ENCODE measurements at regions of chr1 and their contacts with region 1.

Region 1: GRCh38 chr1:155017041-155017945 is 14.7 kb downstream of the ZBTB7B start:
- DNase-seq: peak; percentile 93
- H3K4me3 ChIP-seq: peak overlapping the region; percentile 20 to 51; a peak in 2 of 4 replicates
- H3K27ac ChIP-seq: no peak overlapping the region
- H3K4me1 ChIP-seq: peaks cover 0 to 6% of the 10 kb centered on the region in 2 experiments; a peak in 1 of 4 replicates
- H3K27me3 ChIP-seq: no peaks in the 10 kb centered on the region
- CTCF ChIP-seq: peak; percentile 86
- EP300 ChIP-seq: no peak
- RAD21 ChIP-seq: peak; percentile 67

Region 2: DNA sequence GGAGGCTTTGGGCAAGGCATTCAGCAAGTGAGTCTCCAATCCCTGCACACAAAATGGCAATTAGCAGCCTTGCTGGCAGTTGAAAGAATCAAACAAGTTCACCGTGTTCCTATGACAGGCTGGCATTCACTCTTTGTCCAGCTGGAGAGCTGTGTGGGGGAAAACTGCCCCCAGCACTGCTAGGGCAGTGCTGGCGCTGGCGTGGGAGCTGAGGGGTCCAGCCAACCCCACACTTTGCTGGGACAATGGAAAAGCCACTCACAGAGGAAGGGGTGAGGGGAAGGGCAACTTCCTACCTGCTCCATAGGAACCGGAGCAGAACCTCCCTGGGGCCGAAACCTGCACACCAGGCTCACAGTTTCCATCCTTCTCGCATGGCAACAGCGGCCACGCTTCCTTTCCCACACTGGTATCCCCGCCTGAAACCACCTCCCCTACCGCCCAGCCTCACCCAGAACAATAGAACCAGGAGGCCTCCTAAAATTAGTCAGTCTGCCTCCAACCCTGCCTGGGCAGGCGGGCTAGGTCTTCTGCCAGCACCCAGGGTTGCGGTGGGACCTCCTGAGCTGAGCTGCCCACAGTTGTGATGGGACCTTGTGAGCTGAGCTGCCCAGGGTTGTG is 120.4 kb before region 1 on chr1:
- CTCF ChIA-PET with region 1: no interaction called
- POLR2A ChIA-PET with region 1: no interaction called
- DNase-seq: no peak
- H3K4me3 ChIP-seq: no peak overlapping the region
- H3K27ac ChIP-seq: no peak overlapping the region
- H3K4me1 ChIP-seq: peaks cover 0 to 9% of the 10 kb centered on the region in 2 experiments; a peak in 2 of 4 replicates
- H3K27me3 ChIP-seq: peaks cover 12% of the 10 kb centered on the region
- CTCF ChIP-seq: no peak
- EP300 ChIP-seq: no peak
- RAD21 ChIP-seq: no peak

Region 3: GRCh38 chr1:154943649-154944400 is 73.5 kb before region 1 on chr1:
- CTCF ChIA-PET with region 1: interaction called, 13 read pairs
- POLR2A ChIA-PET with region 1: no interaction called
- DNase-seq: peak; percentile 83
- H3K4me3 ChIP-seq: no peak overlapping the region
- H3K27ac ChIP-seq: no peak overlapping the region
- H3K4me1 ChIP-seq: peaks cover 4 to 25% of the 10 kb centered on the region in 2 experiments; a peak in 2 of 4 replicates
- H3K27me3 ChIP-seq: no peaks in the 10 kb centered on the region
- CTCF ChIP-seq: peak; percentile 82
- EP300 ChIP-seq: no peak
- RAD21 ChIP-seq: peak; percentile 80

Region 4: DNA sequence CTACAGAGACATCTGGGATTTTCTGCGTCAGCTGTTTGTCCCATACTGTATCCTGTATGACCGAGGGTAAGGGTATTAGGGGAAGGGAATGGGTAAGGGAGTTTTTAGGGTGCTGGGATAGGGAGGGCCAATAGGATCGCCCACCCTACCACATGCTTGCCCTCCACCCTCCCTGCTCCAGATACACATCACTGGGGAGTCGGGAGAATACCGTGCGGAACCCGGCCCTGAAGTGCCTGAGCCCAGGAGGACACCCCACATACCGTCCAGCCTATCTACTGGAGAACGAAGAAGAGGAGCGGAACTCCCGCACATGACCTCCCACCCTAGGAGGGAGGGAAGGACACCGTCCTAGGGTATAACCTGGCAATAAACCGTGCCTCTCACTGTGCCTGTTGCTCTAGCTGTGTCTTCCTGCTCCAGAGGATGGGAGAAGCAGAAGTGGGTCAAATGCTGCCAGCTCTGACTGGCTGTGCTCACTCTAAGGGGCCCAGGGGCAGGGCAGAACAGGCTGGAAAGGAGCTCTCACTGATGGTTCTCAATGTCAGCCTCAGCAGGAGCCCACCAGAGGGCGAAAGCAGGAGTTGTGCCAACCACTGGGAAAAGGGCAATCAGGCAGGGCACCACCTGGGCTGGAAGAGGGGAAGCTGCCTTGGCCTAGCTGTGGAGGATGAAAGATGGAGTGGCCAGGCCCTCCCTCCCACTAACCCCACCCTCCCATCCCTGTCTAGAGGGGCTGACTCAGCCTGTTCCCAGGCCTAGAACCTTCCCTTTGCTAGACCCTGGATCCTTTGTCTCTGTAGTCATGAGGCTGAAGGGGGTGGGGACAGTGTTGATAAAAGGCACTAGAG is 24.3 kb before region 1 on chr1:
- CTCF ChIA-PET with region 1: interaction called, 149 read pairs
- POLR2A ChIA-PET with region 1: interaction called, 4 read pairs
- DNase-seq: no peak
- H3K4me3 ChIP-seq: no peak overlapping the region
- H3K27ac ChIP-seq: peak overlapping the region; percentile 14 to 43; a peak in 2 of 4 replicates
- H3K4me1 ChIP-seq: peaks cover 3 to 29% of the 10 kb centered on the region in 2 experiments; a peak in 3 of 4 replicates
- H3K27me3 ChIP-seq: no peaks in the 10 kb centered on the region
- CTCF ChIP-seq: peak; percentile 30
- EP300 ChIP-seq: no peak
- RAD21 ChIP-seq: peak; percentile 31

Region 5: GRCh38 chr1:155029513-155030242 is 12.4 kb after region 1 on chr1:
- CTCF ChIA-PET with region 1: interaction called, 31 read pairs
- POLR2A ChIA-PET with region 1: interaction called, 3 read pairs
- DNase-seq: no peak
- H3K4me3 ChIP-seq: no peak overlapping the region
- H3K27ac ChIP-seq: no peak overlapping the region
- H3K4me1 ChIP-seq: no peaks in the 10 kb centered on the region
- H3K27me3 ChIP-seq: no peaks in the 10 kb centered on the region
- CTCF ChIP-seq: no peak
- EP300 ChIP-seq: no peak
- RAD21 ChIP-seq: no peak

Region 6: DNA sequence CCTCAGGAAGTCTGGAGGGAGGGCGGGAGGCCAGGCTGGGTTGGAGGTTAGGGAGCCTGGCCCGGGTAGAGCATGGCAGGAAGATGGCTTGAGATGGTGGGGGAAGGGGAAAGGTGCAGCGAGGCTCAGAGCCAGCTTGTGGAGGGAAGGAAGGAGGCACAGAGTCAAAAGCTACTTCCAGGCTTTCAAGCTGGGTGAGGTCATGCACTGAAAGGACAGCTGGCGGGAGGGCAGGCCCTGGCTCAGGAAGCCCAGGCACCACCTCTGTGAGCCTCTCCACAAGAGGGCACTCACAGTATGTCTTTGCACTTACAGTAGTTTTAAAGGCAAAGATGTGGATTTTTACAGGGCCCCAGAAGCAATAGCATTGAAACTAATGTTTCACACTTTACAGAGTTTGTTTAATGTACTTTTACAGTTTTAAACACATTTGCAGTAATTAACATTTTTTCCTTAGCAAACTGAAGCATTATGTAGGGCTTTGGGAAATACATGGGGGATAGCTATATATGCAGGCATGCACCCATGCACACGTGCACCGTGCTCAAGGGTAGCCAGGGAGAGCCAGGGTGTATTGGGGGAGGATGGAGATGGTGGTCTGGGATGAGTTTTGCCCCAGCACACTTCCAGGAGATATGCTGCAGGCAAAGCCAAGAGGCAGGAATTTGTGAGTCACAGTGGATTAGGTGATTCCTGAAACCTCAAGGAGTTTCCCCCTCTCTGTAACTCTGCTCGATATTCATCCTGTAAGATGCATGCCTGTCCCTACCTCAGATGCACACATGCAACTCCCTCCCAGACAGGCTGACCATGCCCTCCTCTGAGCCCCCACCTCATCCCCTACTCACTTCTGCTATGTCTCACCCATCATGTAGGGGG is 27.8 kb after region 1 on chr1:
- CTCF ChIA-PET with region 1: interaction called, 71 read pairs
- POLR2A ChIA-PET with region 1: no interaction called
- DNase-seq: peak; percentile 84
- H3K4me3 ChIP-seq: no peak overlapping the region
- H3K27ac ChIP-seq: no peak overlapping the region; a peak in 1 of 4 replicates
- H3K4me1 ChIP-seq: peaks cover 11 to 27% of the 10 kb centered on the region in 2 experiments; a peak in 3 of 4 replicates
- H3K27me3 ChIP-seq: no peaks in the 10 kb centered on the region
- CTCF ChIP-seq: peak; percentile 81
- EP300 ChIP-seq: no peak
- RAD21 ChIP-seq: peak; percentile 84

Region 7: GRCh38 chr1:155057788-155058211 is 40.5 kb after region 1 on chr1:
- CTCF ChIA-PET with region 1: interaction called, 28 read pairs
- POLR2A ChIA-PET with region 1: no interaction called
- DNase-seq: no peak
- H3K4me3 ChIP-seq: no peak overlapping the region
- H3K27ac ChIP-seq: no peak overlapping the region
- H3K4me1 ChIP-seq: peaks cover 0 to 13% of the 10 kb centered on the region in 2 experiments; a peak in 2 of 4 replicates
- H3K27me3 ChIP-seq: no peaks in the 10 kb centered on the region
- CTCF ChIP-seq: peak; percentile 30; the same call in 1 of the 2 replicates
- EP300 ChIP-seq: no peak
- RAD21 ChIP-seq: no peak

Region 8: DNA sequence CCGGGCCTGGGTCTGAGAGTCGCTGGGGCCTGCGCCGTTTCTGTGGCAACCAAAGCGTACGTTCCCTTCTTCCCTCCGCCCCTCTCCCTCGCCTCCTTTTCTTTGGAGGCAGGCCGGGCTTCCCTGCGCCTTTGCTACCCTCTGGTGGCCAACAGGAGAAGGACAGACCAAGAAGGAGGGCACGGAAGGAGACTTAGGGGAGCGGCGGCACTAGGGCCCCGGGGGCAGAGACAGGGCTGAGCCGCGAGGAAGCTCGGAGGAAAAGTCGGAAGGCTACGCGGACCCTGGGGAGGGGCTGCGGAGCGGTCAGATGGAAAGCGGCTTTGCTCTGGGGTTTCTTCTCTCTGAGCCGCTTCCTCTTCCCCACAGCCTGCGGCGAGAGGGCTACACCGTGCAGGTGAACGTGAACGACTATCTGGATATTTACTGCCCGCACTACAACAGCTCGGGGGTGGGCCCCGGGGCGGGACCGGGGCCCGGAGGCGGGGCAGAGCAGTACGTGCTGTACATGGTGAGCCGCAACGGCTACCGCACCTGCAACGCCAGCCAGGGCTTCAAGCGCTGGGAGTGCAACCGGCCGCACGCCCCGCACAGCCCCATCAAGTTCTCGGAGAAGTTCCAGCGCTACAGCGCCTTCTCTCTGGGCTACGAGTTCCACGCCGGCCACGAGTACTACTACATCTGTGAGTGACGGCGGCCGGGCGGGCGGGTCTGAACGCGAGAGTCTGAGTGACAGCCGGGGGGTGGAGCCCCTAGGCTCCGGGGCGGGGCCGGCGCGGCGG is 67.6 kb after region 1 on chr1:
- CTCF ChIA-PET with region 1: interaction called, 15 read pairs
- POLR2A ChIA-PET with region 1: no interaction called
- DNase-seq: peak; percentile 94
- H3K4me3 ChIP-seq: peak overlapping the region; percentile 77 to 79
- H3K27ac ChIP-seq: peak overlapping the region; percentile 69 to 94
- H3K4me1 ChIP-seq: peaks cover 13 to 26% of the 10 kb centered on the region in 2 experiments; a peak in 3 of 4 replicates
- H3K27me3 ChIP-seq: peaks cover 15% of the 10 kb centered on the region
- CTCF ChIP-seq: peak; percentile 82
- EP300 ChIP-seq: peak in 1 of 2 experiments; percentile 26; a peak in 1 of 4 replicates
- RAD21 ChIP-seq: peak; percentile 96

Measured in SK-N-SH (cell line).